Calu3 (cell line): ENCODE measurements at regions of chr22 and their contacts with region 1.

Region 1: DNA sequence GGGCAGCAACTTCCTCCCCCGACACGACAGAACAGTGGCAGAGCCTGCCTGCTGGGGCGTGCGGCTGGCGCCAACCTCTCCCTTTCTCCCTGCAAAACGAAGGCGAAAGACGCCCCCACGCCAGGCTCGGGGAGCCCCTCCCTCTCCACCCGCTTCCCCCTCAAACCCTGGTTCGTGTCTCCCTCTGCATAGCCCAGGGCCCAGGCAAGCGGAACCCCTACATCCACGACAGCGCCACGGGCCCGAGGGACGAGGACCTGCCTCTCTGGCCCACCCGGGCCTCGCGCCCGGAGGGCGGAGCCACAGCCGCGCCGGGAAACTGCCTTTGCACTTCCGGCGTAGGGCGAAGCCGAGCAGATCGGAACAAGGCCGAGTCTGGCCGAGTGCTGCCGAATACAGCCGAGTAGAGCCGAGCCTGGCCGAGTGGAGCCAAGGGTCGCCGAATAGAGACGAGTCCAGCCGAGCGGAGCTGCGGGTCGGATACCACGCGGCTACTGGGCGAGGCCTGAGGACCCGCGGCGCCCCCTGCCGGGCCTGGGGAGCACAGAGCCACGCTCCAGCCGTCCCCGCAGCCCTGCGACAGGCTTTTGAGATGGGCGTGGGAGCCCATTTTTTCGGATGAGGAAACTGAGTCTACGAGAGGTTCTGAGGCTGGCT is 11.2 kb upstream of the C1QTNF6 start:
- DNase-seq: peak; percentile 98
- H3K4me3 Mint-ChIP-seq: peak overlapping the region; percentile 85
- H3K27ac Mint-ChIP-seq: peak overlapping the region; percentile 61
- H3K4me1 Mint-ChIP-seq: peaks cover 43% of the 10 kb centered on the region
- H3K27me3 Mint-ChIP-seq: no peaks in the 10 kb centered on the region
- CTCF ChIP-seq: peak; percentile 82

Region 2: DNA sequence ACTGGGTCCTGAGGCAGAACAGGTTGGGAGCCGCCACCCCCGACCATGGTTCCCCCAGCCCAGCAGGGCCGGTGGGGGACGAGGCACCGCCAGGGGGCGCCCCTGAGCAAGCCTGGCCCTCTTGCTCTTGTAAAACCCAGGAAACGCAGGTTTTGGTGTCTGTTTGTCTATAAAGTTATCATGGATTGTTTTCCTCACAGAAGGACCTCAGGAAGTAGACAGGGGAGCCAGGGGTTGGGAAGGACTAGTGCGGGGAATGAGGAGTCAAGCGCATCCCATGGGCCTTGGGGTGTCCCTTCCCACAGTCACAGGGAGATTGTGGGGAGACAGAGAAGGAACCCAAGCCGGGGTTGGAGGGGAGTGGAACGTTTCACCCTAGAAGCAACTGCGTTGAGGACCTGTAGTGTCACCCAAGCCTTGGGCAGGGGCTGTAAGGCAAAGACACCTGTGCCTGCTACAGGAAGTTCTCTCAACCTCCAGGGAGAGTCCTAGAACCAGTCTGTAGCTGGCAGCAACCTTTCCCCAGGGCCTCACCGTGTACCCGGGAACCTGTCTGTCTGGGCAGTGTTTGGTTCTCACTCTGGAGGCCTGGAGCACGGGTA is 121.2 kb before region 1 on chr22:
- CTCF ChIA-PET with region 1: interaction called, 4 read pairs
- intact Hi-C with region 1: loop called (anchors 5 kb)
- DNase-seq: peak; percentile 84
- H3K4me3 Mint-ChIP-seq: no peak overlapping the region
- H3K27ac Mint-ChIP-seq: no peak overlapping the region
- H3K4me1 Mint-ChIP-seq: no peaks in the 10 kb centered on the region
- H3K27me3 Mint-ChIP-seq: peaks cover 57% of the 10 kb centered on the region
- CTCF ChIP-seq: peak; percentile 98

Region 3: GRCh38 chr22:37166675-37167066 is 32.6 kb before region 1 on chr22:
- CTCF ChIA-PET with region 1: interaction called, 9 read pairs
- intact Hi-C with region 1: loop called (anchors 1 kb)
- DNase-seq: peak; percentile 86
- H3K4me3 Mint-ChIP-seq: no peak overlapping the region
- H3K27ac Mint-ChIP-seq: no peak overlapping the region
- H3K4me1 Mint-ChIP-seq: peaks cover 20% of the 10 kb centered on the region
- H3K27me3 Mint-ChIP-seq: peaks cover 46% of the 10 kb centered on the region
- CTCF ChIP-seq: peak; percentile 91

Region 4: DNA sequence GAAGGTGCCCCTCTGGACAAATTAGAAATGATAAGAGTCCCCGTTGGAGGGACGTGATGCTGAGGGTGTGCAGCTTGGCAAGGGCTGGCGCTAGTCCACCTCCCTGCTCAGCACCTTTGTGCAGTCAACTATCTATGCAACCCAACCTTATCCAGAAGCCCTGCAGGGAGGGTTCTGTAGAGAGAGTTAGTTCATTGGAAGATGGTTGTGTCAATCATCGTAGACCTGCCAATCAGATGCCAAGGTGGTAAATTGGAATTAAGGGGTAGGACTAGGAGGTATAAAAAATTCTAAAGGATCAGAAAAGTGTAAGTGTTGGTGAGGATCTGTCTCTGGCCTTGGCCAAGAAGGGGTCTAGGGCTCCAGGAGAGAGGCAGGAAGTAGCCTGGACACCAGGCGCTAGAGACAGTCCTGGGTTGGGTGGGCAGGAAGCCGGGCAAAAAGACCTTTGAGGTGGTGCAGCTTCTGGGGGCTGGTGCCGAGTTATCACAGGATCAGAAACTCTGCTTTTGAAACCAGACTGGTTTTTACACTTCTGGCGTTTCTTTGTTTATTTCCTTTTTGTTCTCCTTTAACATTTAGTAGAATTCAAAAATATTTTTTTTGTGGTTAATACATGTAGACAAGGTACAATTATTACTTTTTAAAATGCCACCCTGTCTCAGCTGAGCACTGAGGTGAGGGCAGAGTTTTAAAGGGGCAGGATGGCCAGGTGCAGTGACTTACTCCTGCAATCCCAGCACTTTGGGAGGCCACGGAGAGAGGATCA is 12.8 kb before region 1 on chr22:
- CTCF ChIA-PET with region 1: interaction called, 12 read pairs
- intact Hi-C with region 1: no loop called
- DNase-seq: peak; percentile 51
- H3K4me3 Mint-ChIP-seq: peak overlapping the region; percentile 32
- H3K27ac Mint-ChIP-seq: peak overlapping the region; percentile 85
- H3K4me1 Mint-ChIP-seq: peaks cover 56% of the 10 kb centered on the region
- H3K27me3 Mint-ChIP-seq: no peaks in the 10 kb centered on the region
- CTCF ChIP-seq: no peak